Mammary epithelial cell (primary cell): ENCODE measurements at regions of chr14 and their contacts with region 1.

Region 1: GRCh38 chr14:96424109-96424989 is 32.4 kb downstream of the AK7 start:
- DNase-seq: peak; percentile 65
- H3K4me3 ChIP-seq: peak overlapping the region; percentile 36 to 45 (median 42)
- H3K27ac ChIP-seq: no peak overlapping the region
- H3K4me1 ChIP-seq: peaks cover 5% of the 10 kb centered on the region
- H3K27me3 ChIP-seq: no peaks in the 10 kb centered on the region
- CTCF ChIP-seq: peak; percentile 67 to 79

Region 2: DNA sequence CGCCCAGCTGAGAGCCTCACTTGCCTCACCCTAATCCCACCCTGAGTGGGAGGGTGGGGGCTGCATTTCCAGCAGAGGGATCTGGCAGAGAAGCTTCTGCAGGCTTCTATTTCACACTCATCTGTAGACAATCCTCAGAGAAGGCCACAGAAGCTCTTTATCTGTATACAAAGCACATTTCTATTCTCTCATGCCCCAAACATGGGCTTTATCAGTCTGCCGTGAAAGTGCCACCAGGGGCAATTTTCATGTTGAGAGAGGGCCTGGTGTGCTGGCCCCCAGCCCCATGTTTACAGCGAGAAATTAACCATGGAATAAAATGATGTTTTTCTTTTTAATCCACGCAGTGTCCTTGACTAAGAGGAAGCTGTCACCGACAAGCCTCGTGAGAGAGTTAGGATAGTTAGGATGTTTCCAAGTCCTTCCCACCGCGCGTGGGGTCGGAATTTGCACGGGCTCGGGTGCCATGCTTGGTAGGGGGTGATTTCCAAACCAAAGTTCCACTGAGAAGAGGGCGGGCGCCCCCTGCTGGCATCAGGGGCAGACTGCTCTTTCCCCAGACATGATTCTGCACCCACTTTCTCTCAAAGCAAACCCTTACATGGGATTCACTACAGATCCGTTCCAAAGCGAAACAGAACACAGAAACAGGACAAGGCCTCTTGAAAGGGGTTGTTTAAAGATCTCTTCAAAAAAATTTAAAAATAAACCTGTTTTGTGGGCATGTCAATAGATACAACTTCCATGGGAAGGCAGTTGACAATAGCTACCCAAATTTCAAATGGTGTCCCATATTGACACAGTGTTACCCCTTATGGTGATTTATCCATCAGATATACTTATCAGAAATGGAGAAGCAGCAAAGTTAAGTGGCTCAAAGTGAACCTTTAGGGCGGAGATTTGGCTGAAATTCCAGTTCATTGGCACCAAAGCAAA is 148.9 kb before region 1 on chr14:
- CTCF ChIA-PET with region 1: no interaction called
- dilution Hi-C with region 1: no loop called
- in situ Hi-C with region 1: loop called in 1 of 2 experiments (anchors 10 kb)
- intact Hi-C with region 1: loop called (anchors 2 kb)
- DNase-seq: peak; percentile 29
- H3K4me3 ChIP-seq: no peak overlapping the region
- H3K27ac ChIP-seq: no peak overlapping the region
- H3K4me1 ChIP-seq: peaks cover 10% of the 10 kb centered on the region
- H3K27me3 ChIP-seq: no peaks in the 10 kb centered on the region
- CTCF ChIP-seq: peak; percentile 97 to 99

Region 3: GRCh38 chr14:96281486-96281885 is 142.9 kb before region 1 on chr14:
- CTCF ChIA-PET with region 1: no interaction called
- dilution Hi-C with region 1: no loop called
- in situ Hi-C with region 1: loop called in 1 of 2 experiments (anchors 10 kb)
- intact Hi-C with region 1: loop called (anchors 1 kb)
- DNase-seq: no peak
- H3K4me3 ChIP-seq: no peak overlapping the region
- H3K27ac ChIP-seq: no peak overlapping the region
- H3K4me1 ChIP-seq: no peaks in the 10 kb centered on the region
- H3K27me3 ChIP-seq: no peaks in the 10 kb centered on the region
- CTCF ChIP-seq: no peak

Region 4: DNA sequence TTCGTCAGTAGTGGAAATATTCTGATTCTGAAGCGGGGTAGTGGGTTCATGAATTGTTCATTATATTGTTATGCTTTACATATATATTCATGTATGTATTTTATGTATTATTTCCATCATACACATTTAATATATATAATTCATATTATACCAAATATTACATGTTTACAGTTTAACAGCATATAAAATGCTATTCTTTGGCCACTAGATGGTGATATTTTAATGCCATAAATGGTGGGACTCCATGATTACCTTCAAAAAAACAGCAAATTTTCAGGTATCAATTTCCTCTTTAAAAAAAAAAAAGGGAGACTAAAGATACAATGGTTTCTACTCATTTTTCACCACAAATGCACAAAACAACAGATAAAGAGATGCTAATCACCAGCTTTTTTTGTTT is 127.3 kb before region 1 on chr14:
- CTCF ChIA-PET with region 1: no interaction called
- dilution Hi-C with region 1: no loop called
- in situ Hi-C with region 1: loop called in 1 of 2 experiments (anchors 10 kb)
- intact Hi-C with region 1: loop called (anchors 1 kb)
- DNase-seq: no peak
- H3K4me3 ChIP-seq: no peak overlapping the region
- H3K27ac ChIP-seq: no peak overlapping the region
- H3K4me1 ChIP-seq: no peaks in the 10 kb centered on the region
- H3K27me3 ChIP-seq: no peaks in the 10 kb centered on the region
- CTCF ChIP-seq: peak; percentile 51 to 56

Region 5: DNA sequence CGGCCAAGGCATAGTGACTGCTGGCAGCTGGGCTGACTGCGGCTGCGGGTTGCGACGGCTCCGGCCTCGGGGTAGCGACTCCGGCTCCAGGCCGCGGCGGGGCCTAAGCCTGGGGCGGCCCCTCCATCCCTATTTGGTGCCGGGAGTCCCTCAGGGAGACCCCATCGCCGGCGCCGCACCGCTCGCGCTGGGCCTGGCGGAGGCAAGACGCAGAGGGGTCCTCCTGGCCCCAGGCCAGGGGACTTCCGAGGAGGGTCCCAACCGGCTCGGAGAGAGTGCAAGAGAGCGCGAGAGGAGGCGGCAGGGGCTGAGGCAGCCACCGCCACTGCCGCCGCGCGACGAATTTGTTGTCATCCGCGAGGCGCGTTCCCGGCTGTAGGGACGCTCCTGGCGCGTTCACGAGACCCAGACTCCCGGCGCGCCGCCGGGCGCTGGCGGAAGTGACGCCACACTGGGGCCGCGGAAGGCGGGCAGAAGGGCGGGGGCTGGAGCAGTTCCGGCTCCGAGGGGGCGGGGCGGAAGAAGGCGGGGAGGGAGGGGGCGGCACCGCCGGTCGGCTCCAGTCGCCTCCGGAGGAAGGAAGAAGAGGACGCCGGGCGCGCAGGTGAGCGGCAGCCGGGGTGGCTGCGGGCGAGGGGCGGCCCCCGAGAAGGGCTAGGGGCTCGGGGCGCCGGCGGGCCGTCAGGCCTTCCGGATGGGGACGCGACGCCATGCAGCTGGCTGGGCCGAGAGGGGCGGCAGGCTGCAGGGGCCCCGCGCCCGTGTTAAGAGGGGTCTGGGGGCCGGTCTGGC is 61.2 kb before region 1 on chr14 and contains the starts of genes ATG2B and GSKIP:
- CTCF ChIA-PET with region 1: no interaction called
- dilution Hi-C with region 1: no loop called
- in situ Hi-C with region 1: no loop called
- intact Hi-C with region 1: loop called (anchors 1 kb)
- DNase-seq: peak; percentile 87
- H3K4me3 ChIP-seq: peak within 1 kb of the TSS; percentile 74 to 95 (median 88)
- H3K27ac ChIP-seq: peak within 1 kb of the TSS; percentile 71
- H3K4me1 ChIP-seq: peaks cover 22% of the 10 kb centered on the region
- H3K27me3 ChIP-seq: no peaks in the 10 kb centered on the region
- CTCF ChIP-seq: no peak
- total RNA-seq, gene ATG2B: 15.6 to 21.8 TPM
- total RNA-seq, gene GSKIP: 32.2 to 61.0 TPM

Region 6: DNA sequence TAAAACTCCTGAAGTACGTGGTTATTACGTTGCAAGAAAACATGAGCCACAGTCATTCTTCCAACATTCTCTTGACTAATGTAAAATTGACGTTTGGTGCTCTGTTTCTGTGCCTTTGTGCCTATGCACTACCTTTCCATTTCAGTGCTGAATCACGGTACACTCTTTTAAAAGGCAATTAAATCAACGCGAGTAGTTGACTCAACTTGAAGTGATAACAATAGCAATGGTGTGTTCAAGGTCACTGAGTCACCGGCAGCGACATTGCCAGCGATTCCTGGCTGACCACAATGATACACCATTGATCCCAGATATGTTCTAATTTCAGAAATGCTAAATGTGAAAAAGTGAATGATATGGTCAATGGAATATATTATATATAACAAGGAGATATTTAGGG is 14.6 kb before region 1 on chr14:
- CTCF ChIA-PET with region 1: no interaction called
- dilution Hi-C with region 1: no loop called
- in situ Hi-C with region 1: no loop called
- intact Hi-C with region 1: no loop called
- DNase-seq: peak; percentile 20
- H3K4me3 ChIP-seq: no peak overlapping the region
- H3K27ac ChIP-seq: no peak overlapping the region
- H3K4me1 ChIP-seq: no peaks in the 10 kb centered on the region
- H3K27me3 ChIP-seq: no peaks in the 10 kb centered on the region
- CTCF ChIP-seq: no peak